ENCODE measurements at regions of chr2 and their contacts with region 1.

Region 1: DNA sequence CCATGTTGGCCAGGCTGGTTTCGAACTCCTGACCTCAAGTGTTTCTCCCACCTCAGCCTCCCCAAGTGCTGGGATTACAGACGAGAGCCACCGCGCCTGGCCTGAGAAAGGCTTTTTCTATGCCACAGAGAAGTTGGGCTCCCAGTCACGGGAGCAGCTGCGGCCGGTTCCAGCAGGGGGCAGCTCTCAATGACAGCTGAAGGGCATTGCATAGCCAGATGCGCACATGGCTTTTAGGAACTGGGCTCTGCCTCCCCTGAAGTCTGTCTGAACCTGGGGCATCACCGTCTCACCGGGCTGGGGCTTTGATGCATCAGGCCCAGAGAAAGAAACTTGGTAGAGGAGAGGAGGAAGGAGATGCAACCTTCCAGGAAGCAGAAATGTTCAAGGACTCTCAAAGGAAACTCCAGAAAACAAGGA is 84.2 kb upstream of the LAPTM4A start:
- DNase-seq: peak; percentile 6
- H3K4me3 Mint-ChIP-seq: no peak overlapping the region
- H3K27ac Mint-ChIP-seq: no peak overlapping the region
- H3K4me1 Mint-ChIP-seq: no peaks in the 10 kb centered on the region
- H3K27me3 Mint-ChIP-seq: no peaks in the 10 kb centered on the region

Region 2: GRCh38 chr2:19989681-19990415 is 145.8 kb before region 1 on chr2 and contains the start of gene WDR35:
- intact Hi-C with region 1: no loop called
- DNase-seq: peak; percentile 92
- H3K4me3 Mint-ChIP-seq: peak within 1 kb of the TSS; percentile 90
- H3K27ac Mint-ChIP-seq: peak within 1 kb of the TSS; percentile 69
- H3K4me1 Mint-ChIP-seq: peaks cover 19% of the 10 kb centered on the region
- H3K27me3 Mint-ChIP-seq: peaks cover 30% of the 10 kb centered on the region
- total RNA-seq, gene WDR35: 7.7 and 7.8 TPM in 2 replicates

Region 3: DNA sequence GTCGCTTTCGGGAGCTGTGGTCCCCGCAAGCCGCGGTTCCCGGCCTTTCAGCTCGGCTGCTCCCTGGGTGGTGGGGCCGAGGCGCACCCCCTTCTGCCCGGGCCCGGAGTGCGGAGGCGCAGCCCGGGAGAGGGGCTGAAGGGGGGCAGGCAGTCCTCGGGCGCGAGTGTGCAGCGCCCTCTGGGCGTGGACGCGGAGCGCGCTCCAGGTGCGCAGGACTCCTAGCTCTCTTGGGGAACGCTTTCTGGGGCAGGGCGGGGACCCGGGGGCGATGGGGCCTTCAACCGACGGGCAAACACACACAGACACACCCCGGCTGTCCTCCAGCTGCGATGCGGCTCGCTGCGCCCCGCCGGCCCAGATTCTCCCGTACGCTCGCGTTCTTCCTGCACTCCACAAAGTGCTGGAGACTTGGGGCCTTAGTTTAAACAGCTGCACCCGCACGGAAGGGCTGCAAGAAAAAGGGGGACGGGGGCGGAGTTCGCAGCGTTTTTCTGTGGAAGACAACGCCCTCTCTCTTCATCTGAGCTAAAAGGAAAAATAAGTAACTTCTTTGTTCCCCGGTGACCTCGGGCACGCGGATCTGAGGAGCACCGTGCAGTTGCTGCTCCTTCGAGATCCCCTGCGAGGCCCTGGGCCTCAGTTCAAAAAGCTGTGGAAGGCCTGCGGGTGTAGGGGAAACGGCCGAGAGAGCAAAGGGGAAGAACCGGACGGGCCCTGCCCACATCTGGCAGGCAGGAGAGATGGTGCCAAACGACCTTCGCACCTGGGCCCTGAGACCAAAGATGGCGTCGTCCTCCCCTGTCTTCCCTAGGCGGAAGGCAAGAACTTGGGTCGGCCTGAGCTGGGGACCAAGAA is 89.9 kb after region 1 on chr2:
- intact Hi-C with region 1: loop called (anchors 1 kb)
- DNase-seq: peak; percentile 19
- H3K4me3 Mint-ChIP-seq: peak overlapping the region; percentile 53
- H3K27ac Mint-ChIP-seq: no peak overlapping the region
- H3K4me1 Mint-ChIP-seq: no peaks in the 10 kb centered on the region
- H3K27me3 Mint-ChIP-seq: peaks cover 60% of the 10 kb centered on the region